ENCODE measurements at regions of chr6 and their contacts with region 1.

Region 1: GRCh38 chr6:3848925-3849605 is at the start of gene FAM50B:
- DNase-seq: no peak
- H3K4me3 ChIP-seq: peak within 1 kb of the TSS; percentile 59
- CTCF ChIP-seq: peak; percentile 94

Region 2: DNA sequence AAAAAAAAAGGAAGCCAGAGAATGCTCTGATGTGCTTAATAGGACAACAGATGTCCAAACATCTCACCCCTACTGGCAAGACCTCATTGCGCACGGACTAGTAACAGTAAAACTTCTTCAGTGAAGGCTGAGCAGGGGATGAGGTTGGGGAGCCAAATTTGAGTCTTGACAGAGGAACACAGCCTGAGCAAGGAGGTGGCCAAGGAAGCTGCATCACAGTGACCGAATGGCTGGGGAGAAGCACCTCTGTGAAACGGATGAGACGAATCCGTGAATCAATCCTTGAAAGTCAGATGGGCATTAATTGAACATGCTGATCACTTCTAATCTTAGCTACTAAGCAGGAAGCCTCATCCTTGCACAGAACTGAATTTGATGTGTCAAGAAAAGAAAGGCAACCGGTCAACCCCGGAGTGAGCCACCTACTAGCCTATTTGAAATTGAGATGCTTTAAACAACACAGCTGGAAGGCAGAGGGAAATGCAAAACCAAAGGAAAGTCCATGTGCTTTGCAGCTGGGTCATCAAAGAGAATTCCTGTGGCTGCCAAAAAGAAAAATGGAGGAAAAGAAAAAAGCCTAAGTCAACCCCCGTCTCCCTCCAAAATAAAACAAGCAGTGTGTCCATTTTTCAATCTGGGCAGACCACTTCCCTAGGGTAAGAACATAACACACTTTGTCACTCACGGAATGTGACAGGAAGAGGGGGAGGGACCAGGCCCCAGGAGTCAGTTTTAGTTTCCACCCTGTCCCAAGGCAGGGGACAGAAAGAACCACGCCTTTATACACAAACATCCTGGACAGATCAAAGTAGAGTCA is 127.0 kb before region 1 on chr6:
- CTCF ChIA-PET with region 1: no interaction called
- POLR2A ChIA-PET with region 1: no interaction called
- DNase-seq: no peak
- H3K4me3 ChIP-seq: no peak overlapping the region
- CTCF ChIP-seq: no peak

Region 3: GRCh38 chr6:3751730-3752542 is 97.1 kb before region 1 on chr6:
- CTCF ChIA-PET with region 1: interaction called, 66 read pairs
- POLR2A ChIA-PET with region 1: interaction called, 27 read pairs
- DNase-seq: no peak
- H3K4me3 ChIP-seq: peak overlapping the region; percentile 92
- CTCF ChIP-seq: peak; percentile 53

Region 4: GRCh38 chr6:3861424-3861823 is 12.4 kb after region 1 on chr6:
- CTCF ChIA-PET with region 1: interaction called, 53 read pairs
- POLR2A ChIA-PET with region 1: interaction called, 3 read pairs
- DNase-seq: no peak
- H3K4me3 ChIP-seq: no peak overlapping the region
- CTCF ChIP-seq: no peak

Region 5: GRCh38 chr6:3887150-3887700 is 38.2 kb after region 1 on chr6:
- CTCF ChIA-PET with region 1: interaction called, 99 read pairs
- POLR2A ChIA-PET with region 1: no interaction called
- DNase-seq: no peak
- H3K4me3 ChIP-seq: no peak overlapping the region
- CTCF ChIP-seq: peak; percentile 55

Region 6: DNA sequence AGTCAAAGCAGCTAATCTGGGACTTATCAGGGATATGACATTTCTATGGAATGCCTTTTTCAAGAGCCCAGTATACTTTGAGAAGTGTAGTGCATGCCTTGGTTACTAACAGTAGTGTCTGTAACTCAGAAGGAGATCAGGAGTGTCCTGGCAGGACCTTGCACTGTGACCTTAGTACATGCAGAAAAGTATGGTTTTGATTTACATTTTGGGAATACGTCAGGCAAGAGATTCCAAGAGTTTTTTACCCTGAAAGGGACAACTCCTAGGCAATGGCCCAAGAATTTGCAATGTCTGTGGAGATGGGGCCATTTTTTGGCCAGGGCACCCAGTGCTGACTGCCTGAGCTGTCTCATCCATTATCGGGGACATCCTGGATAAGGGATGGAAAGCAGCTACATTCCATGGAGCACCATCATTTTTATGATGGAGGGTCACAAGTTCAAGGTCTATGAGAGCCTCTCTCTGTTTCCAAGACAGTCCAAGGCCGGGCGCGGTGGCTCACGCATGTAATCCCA is 80.3 kb after region 1 on chr6:
- CTCF ChIA-PET with region 1: interaction called, 73 read pairs
- POLR2A ChIA-PET with region 1: no interaction called
- DNase-seq: peak; percentile 96
- H3K4me3 ChIP-seq: no peak overlapping the region
- CTCF ChIP-seq: no peak

Region 7: DNA sequence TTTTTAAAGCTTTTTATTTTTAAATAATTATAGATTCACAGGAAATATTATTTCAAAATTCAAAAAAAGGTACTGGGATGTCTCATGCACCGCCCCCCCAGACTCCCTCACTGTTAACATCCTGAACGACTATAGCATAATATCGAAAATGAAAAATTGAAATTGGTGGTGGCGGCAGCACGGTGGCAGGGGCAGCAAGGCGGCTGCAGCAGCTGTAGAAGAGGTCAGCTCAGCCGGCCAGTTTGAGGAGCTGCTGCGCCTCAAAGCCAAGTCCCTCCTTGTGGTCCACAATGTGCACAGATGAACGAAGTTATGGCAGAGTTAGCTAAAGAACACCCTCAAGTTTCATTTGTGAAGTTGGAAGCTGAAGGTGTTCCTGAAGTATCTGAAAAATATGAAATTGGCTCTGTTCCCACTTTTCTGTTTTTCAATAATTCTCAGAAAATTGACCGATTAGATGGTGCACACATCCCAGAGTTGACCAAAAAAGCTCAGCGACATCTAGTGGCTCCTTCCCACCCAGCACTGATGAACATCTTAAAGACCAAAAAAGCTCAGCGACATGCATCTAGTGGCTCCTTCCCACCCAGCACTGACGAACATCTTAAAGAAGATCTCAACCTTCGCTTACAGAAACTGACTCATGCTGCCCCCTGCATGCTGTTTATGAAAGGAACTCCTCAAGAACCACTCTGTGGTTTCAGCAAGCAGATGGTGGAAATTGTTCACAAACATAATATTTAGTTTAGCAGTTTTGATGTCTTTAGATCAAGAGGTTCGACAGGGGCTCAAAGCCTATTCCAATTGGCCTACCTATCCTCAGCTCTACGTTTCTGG is 129.0 kb after region 1 on chr6:
- CTCF ChIA-PET with region 1: interaction called, 164 read pairs
- POLR2A ChIA-PET with region 1: interaction called, 7 read pairs
- DNase-seq: peak; percentile 84
- H3K4me3 ChIP-seq: no peak overlapping the region
- CTCF ChIP-seq: peak; percentile 46

Region 8: GRCh38 chr6:4008324-4009047 is 159.4 kb after region 1 on chr6:
- CTCF ChIA-PET with region 1: interaction called, 26 read pairs
- POLR2A ChIA-PET with region 1: no interaction called
- DNase-seq: peak; percentile 76
- H3K4me3 ChIP-seq: no peak overlapping the region
- CTCF ChIP-seq: peak; percentile 44

Measured in AG04449 (cell line).